IMR-90 (cell line): ENCODE measurements at regions of chr1 and their contacts with region 1.

Region 1: DNA sequence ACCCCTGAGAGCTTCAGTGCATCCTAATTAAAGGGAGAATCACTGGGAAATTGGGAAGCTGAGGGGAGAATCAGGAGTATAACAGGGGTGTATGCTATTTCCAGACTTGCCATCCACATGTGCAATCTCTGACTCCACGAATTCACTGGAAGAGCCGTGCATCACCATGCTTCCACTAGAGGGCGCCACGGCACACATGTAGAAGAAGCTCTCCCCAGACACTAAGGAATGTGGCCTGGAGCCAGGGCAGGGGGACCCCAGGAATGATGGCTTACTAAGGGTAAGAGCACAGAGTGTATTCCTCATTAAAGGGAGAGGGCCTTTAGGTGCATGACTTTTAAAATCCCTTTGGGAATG is 81.5 kb downstream of the ABCA4 start:
- DNase-seq: peak; percentile 62
- ATAC-seq: peak; percentile 22; the same call in 1 of the 2 replicates
- H3K4me3 ChIP-seq: no peak overlapping the region
- H3K27ac ChIP-seq: no peak overlapping the region
- H3K4me1 ChIP-seq: peaks cover 28% of the 10 kb centered on the region
- H3K27me3 ChIP-seq: no peaks in the 10 kb centered on the region
- CTCF ChIP-seq: peak; percentile 71
- POLR2A ChIP-seq: no peak
- RAD21 ChIP-seq: peak; percentile 59

Region 2: GRCh38 chr1:94025383-94026340 is 13.8 kb before region 1 on chr1:
- CTCF ChIA-PET with region 1: interaction called, 32 read pairs
- POLR2A ChIA-PET with region 1: no interaction called
- dilution Hi-C with region 1: no loop called
- in situ Hi-C with region 1: no loop called
- intact Hi-C with region 1: no loop called
- DNase-seq: peak; percentile 79
- ATAC-seq: peak; percentile 50
- H3K4me3 ChIP-seq: no peak overlapping the region
- H3K27ac ChIP-seq: no peak overlapping the region
- H3K4me1 ChIP-seq: peaks cover 15% of the 10 kb centered on the region
- H3K27me3 ChIP-seq: no peaks in the 10 kb centered on the region
- CTCF ChIP-seq: peak; percentile 83
- POLR2A ChIP-seq: no peak
- RAD21 ChIP-seq: peak; percentile 81